ENCODE measurements at regions of chr1 and their contacts with region 1.

Region 1: GRCh38 chr1:44652445-44653106 is 21.7 kb downstream of the TMEM53 start:
- DNase-seq: peak; percentile 81
- ATAC-seq: peak; percentile 93
- H3K4me3 Mint-ChIP-seq: no peak overlapping the region
- H3K27ac Mint-ChIP-seq: no peak overlapping the region
- H3K4me1 Mint-ChIP-seq: no peaks in the 10 kb centered on the region
- H3K27me3 Mint-ChIP-seq: no peaks in the 10 kb centered on the region

Region 2: DNA sequence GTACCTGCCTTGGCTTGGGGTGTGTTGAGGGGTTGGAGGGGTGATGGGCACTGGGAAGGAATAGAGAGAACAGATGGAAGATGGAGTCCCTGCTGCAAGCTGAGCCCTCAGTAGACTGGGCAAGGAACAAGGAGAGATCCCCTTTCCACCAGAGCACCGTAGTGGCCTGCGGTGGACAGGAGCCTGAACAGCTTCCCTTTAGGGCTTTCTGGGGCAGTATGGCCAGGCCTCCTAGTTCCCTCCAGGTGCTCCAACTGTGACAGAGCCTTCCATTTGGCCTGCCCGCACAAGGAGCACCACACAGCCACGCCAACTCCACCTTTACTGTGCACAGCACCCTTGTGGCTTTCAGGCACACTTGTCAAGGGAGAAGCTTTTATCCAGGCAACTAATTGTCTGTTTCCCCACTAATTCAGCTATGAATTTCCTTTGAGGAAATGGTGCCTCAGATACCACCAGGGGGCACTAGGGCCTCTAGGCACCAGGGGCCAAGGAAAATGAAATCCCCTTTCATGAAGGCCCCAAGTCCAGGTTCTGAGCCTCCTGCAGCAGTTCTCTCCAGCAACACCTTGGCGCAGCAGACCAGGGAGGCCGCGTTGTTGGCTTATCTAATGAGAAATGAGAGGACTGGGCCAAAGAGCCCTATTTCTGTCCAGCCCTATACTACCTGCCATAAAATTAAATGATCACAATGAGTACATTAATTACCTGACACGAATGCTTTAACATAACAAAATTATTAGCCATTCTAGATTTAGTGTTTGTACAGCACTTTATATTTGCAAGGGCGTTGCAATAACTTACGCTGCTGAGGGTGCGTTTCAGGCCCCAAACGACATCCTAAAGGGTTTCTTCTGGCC is 274.4 kb before region 1 on chr1:
- CTCF ChIA-PET with region 1: interaction called, 31 read pairs
- DNase-seq: peak; percentile 55
- ATAC-seq: no peak
- H3K4me3 Mint-ChIP-seq: no peak overlapping the region
- H3K27ac Mint-ChIP-seq: no peak overlapping the region
- H3K4me1 Mint-ChIP-seq: peaks cover 5% of the 10 kb centered on the region
- H3K27me3 Mint-ChIP-seq: peaks cover 8% of the 10 kb centered on the region

Region 3: DNA sequence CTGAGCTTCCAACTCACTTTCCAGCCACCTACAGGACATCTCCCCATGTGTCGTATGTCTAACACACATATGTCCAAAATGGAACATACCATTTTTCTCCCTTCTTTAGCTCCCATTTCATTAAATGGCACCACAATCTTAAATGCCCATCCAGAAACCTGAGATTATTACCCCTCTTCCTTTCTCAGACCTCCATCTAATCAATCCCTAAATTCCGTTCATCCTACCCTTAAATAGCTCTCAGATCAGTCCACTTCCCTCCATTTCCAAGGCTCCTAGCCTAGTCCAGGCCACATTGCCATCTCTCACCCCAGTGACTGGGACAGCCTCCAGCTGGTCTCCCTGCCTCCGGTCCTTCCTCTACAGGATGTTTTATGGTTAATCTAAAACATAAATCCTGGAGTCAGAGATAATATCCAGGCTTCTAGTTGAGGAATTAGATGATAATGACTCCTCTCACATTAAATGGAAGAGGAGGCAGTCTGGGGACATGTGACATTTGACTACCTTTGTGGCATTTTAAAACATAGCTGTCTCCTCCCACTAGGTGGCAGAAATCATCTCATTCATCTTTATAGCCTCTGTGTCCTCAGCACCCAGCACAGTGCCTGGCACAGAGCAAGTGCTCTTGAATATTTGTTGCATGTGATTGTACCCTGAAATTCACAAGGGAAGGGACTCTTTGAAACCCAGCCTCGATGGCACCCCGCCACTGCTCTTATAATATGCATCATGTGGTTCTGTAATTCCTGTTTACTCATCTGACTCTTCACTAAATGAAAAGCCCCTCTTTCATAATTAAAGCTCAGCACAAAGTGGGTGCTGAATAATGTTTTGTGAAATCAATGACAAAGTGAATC is 80.6 kb before region 1 on chr1:
- CTCF ChIA-PET with region 1: interaction called, 62 read pairs
- DNase-seq: peak; percentile 44
- ATAC-seq: peak; percentile 74
- H3K4me3 Mint-ChIP-seq: no peak overlapping the region
- H3K27ac Mint-ChIP-seq: no peak overlapping the region
- H3K4me1 Mint-ChIP-seq: no peaks in the 10 kb centered on the region
- H3K27me3 Mint-ChIP-seq: peaks cover 37% of the 10 kb centered on the region

Region 4: DNA sequence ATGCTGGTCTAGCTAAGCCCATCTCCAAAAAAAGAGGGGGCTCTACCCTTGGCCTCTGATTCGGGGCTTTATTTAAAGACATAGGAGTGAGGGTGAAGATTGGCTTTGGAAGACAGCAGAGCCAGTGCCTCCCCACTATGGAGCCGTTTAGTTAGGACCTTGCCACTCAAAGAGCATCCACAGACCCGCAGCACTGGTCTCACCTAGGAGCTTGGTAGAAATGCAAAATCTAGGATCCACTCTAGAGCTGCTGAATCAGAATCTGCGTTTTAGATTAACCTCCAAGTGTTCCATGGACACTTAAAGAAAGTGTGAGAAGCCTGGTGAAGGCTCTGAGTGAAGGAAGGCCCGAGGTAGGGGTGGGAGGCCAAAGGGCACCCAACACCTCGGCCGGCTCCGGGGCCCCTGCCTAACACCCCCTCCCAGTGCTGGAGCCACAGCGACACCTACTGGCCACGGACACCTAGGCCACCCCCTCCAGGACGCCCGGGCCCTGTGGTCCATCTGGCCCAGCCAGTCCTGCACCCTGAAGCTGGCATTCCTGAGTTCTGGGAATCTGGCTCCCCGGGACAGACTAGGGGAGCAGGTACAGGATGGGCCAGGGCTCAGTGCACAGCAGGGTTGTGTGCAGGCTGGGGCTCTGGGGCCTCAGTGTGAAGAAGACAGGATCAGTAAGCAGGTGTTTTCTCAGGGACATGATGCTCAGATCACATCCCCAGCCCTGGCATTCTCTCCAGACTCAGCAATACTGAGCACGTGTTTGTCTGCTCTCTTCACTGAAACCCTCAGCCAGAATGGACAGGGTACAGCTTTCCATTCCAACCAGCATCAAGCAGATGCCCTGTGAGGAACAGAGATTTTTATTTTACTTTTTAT is 57.5 kb before region 1 on chr1:
- CTCF ChIA-PET with region 1: interaction called, 13 read pairs
- DNase-seq: peak; percentile 84
- ATAC-seq: peak; percentile 97
- H3K4me3 Mint-ChIP-seq: no peak overlapping the region
- H3K27ac Mint-ChIP-seq: no peak overlapping the region
- H3K4me1 Mint-ChIP-seq: no peaks in the 10 kb centered on the region
- H3K27me3 Mint-ChIP-seq: peaks cover 3% of the 10 kb centered on the region

Region 5: DNA sequence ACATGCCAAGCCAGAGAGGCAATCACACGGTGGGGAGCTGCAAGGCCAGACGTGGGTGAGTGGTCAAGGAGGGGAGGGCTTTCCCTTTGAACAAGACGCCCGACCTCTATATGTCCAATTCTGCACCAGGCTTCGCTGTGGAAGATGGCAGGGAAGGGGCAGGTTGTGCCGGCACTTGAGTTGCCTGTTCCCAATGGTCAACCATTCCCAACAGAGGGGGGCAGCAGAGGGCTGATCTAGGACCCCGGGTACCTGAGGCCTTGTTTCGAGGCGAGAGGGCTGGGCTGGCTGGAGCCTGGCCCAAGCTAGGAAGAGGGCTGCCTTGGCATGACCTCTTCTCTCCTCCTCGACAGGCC is 43.2 kb before region 1 on chr1:
- CTCF ChIA-PET with region 1: interaction called, 42 read pairs
- DNase-seq: peak; percentile 46
- ATAC-seq: no peak
- H3K4me3 Mint-ChIP-seq: no peak overlapping the region
- H3K27ac Mint-ChIP-seq: no peak overlapping the region
- H3K4me1 Mint-ChIP-seq: no peaks in the 10 kb centered on the region
- H3K27me3 Mint-ChIP-seq: peaks cover 6% of the 10 kb centered on the region

Region 6: GRCh38 chr1:44631647-44632539 is 20.7 kb before region 1 on chr1:
- CTCF ChIA-PET with region 1: interaction called, 65 read pairs
- DNase-seq: peak; percentile 95
- ATAC-seq: peak; percentile 83
- H3K4me3 Mint-ChIP-seq: peak overlapping the region; percentile 84
- H3K27ac Mint-ChIP-seq: peak overlapping the region; percentile 95
- H3K4me1 Mint-ChIP-seq: peaks cover 35% of the 10 kb centered on the region
- H3K27me3 Mint-ChIP-seq: no peaks in the 10 kb centered on the region

Region 7: GRCh38 chr1:44674113-44675000 is 21.8 kb after region 1 on chr1 and contains the starts of genes ARMH1 and TMEM53:
- CTCF ChIA-PET with region 1: interaction called, 49 read pairs
- DNase-seq: peak; percentile 100
- ATAC-seq: peak; percentile 96
- H3K4me3 Mint-ChIP-seq: peak within 1 kb of the TSS; percentile 78
- H3K27ac Mint-ChIP-seq: peak within 1 kb of the TSS; percentile 90
- H3K4me1 Mint-ChIP-seq: peaks cover 32% of the 10 kb centered on the region
- H3K27me3 Mint-ChIP-seq: no peaks in the 10 kb centered on the region
- total RNA-seq, gene ARMH1: 17.0 to 17.2 TPM
- total RNA-seq, gene TMEM53: 3.6 to 3.7 TPM

Measured in activated CD8-positive, alpha-beta memory T cell treated with anti-CD3 and anti-CD28 coated beads, Interleukin-2, amount 10 ng/mL, durations not matched to agents 7 days and 5 days (primary cell).